Left colon (tissue), 2 donors: ENCODE measurements at regions of chr17 and their contacts with region 1.

Region 1: GRCh38 chr17:50749245-50749644 is 18.1 kb downstream of the ANKRD40CL start:
- DNase-seq: no peak
- ATAC-seq: no peak

Region 2: GRCh38 chr17:50798424-50799288 is 49.4 kb after region 1 on chr17:
- intact Hi-C with region 1: no loop called
- DNase-seq: no peak
- ATAC-seq: no peak

Region 3: GRCh38 chr17:50976951-50977472 is 227.8 kb after region 1 on chr17:
- intact Hi-C with region 1: loop called in 1 of 2 experiments (anchors 10 kb)
- DNase-seq: no peak
- ATAC-seq: no peak